GM10248 (cell line): ENCODE measurements at regions of chr3 and their contacts with region 1.

Region 1: GRCh38 chr3:139361276-139361675 is 17.5 kb downstream of the MRPS22 start:
- DNase-seq: no peak
- CTCF ChIP-seq: no peak

Region 2: DNA sequence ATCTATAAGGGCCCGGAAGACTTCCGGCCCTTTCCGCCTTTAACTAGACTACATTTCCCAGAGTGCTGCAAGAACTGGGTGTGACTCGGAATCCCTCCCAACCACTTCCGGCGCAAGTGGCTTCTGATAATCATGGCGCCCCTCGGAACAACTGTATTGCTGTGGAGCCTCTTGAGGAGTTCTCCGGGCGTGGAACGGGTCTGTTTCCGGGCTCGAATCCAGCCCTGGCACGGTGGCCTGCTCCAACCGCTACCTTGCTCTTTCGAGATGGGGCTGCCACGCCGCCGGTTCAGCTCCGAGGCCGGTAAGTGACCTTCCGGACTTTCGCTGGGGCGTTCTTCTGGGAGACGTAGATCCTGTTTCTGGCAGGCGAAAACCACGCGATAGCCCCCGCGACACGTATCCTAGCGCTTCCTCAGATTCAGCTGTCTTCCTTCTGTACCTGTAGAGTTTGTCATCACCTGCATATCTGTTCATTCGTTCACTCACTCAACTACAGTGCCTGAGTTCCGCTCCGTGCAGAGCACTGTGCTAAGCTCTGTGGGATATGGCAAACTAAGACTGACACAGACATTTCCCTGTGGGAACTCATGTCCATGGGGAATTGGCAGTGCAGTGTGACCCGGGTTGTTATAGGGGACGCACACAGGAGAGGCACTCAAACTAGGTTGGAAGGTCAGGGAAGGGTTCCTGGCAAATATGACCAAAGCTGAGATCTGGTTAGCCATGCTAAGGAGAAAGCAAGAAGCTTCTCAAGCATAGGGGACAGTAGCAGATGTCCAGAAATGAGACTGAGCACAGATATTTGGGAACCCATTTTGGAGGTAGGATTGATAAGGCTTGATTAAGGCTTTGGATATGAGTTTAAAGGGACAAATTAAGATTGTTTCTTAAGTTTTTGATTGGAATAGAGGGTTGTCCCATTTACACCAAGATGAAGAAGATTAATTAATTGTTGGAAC is 17.1 kb before region 1 on chr3 and contains the start of gene MRPS22:
- CTCF ChIA-PET with region 1: interaction called, 11 read pairs
- POLR2A ChIA-PET with region 1: no interaction called
- DNase-seq: peak; percentile 92
- CTCF ChIP-seq: no peak